Activated T-helper 2 cell treated with anti-CD3 and anti-CD28 coated beads, Interferon-gamma antibody, Interleukin-2, Interleukin-4, amounts not matched to agents 10 μg/mL and 5 μg/mL and 100 μg/mL, durations not matched to agents 14 hours and 24 hours and 36 hours (primary cell): ENCODE measurements at regions of chr2 and their contacts with region 1.

Region 1: DNA sequence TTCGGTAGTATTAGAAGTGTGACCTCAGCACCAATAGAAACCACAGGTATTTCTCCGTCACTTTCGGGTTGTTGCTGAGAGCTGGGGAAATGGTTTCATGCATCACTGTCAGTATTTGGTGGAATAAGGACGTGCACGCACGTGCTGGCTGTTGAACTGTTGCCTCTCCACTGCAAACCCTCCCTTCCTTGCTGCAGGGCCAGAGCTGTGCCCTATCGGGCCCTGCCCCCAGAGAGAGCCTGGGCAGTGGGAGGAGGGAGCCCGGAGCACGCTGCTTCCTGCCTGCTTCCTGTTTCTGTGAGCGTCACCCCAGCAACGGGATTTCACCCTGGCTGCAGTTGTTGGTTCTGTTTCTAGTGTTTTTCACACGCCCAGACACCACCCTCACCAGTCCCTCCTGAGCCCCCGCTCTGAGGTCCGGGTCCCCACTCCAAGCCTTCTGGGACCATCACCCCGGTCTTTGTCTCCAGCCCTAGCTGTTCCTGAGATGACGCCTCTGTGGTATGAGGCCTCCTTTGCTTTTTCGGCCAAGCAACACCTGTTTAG is 47.4 kb downstream of the LRRFIP1 start:
- DNase-seq: peak; percentile 81
- H3K4me3 Mint-ChIP-seq: peak overlapping the region; percentile 83
- H3K27ac Mint-ChIP-seq: peak overlapping the region; percentile 85
- H3K4me1 Mint-ChIP-seq: peaks cover 53% of the 10 kb centered on the region
- H3K27me3 Mint-ChIP-seq: no peaks in the 10 kb centered on the region

Region 2: DNA sequence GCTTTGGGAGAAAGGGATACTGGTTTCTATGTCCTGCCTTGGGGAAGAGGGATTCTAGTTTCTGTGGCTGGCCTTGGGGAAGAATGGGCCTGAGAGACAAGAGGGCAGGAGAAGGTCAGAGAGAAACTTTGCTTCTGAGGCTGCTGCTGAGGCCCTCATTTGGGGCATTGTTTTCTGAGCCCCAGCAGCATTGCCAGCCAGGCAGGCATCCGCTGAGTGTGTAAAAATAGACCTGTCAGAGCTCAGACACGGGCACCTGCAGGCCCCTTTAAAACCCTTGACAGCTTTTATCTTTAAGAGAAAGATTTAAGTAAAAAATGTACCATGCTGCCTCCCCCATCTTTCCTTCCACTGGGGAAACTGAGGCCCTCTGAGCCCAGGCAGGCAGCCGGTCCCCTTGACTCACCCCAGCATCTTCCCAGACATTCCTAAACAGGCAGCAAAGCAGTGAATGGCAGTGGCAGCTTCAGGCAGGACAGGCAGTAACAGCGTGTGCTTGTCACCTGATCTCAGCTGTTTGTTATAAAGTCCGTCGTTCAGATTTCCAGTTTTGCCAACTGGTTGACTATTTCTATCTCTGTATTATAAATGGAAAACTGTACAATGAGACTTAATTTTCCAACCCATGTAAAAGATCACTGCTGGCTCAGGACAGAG is 160.2 kb before region 1 on chr2:
- intact Hi-C with region 1: no loop called
- DNase-seq: no peak
- H3K4me3 Mint-ChIP-seq: no peak overlapping the region
- H3K27ac Mint-ChIP-seq: no peak overlapping the region
- H3K4me1 Mint-ChIP-seq: no peaks in the 10 kb centered on the region
- H3K27me3 Mint-ChIP-seq: no peaks in the 10 kb centered on the region

Region 3: GRCh38 chr2:237627441-237628246 is 47.2 kb before region 1 on chr2 and contains the start of gene LRRFIP1:
- intact Hi-C with region 1: loop called (anchors 2 kb)
- DNase-seq: no peak
- H3K4me3 Mint-ChIP-seq: peak within 1 kb of the TSS; percentile 70
- H3K27ac Mint-ChIP-seq: no peak within 1 kb of the TSS
- H3K4me1 Mint-ChIP-seq: peaks cover 3% of the 10 kb centered on the region
- H3K27me3 Mint-ChIP-seq: peaks cover 56% of the 10 kb centered on the region
- total RNA-seq, gene LRRFIP1: 254 and 256 TPM in 2 replicates

Region 4: GRCh38 chr2:237691908-237692600 is 17.2 kb after region 1 on chr2:
- intact Hi-C with region 1: loop called (anchors 1 kb)
- DNase-seq: peak; percentile 91
- H3K4me3 Mint-ChIP-seq: peak overlapping the region; percentile 99
- H3K27ac Mint-ChIP-seq: peak overlapping the region; percentile 98
- H3K4me1 Mint-ChIP-seq: peaks cover 59% of the 10 kb centered on the region
- H3K27me3 Mint-ChIP-seq: no peaks in the 10 kb centered on the region

Region 5: DNA sequence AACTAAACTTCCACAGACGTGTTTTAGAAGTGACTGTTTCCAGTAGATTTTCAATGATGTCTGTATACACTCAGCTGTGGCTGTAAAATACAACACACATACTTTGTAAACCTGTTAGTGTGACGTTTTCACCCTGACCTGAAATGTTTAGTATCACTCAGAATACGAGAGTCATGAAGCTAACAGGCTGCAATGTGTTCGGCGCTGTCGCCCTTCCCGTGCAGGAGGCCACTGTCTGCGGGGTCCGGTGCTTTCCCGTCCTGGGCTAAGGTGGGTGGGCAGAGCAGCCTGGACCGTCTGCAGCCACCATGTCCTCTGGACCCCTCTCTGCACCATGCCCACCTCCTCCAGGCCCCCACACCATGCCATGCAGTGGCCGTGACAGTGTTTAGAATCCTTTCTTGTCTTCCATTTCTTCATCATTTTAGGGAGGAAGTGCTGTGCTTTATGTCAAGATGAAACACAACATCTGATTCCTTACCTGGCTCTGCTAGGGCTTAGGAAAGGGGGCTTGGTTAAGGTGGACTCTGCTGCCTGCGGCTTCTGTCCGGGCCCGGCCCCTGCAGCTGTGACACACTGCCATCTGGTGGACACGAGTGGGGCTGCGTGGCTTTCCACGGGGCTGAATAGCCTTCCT is 69.9 kb after region 1 on chr2:
- intact Hi-C with region 1: loop called (anchors 1 kb)
- DNase-seq: peak; percentile 53
- H3K4me3 Mint-ChIP-seq: no peak overlapping the region
- H3K27ac Mint-ChIP-seq: peak overlapping the region; percentile 68
- H3K4me1 Mint-ChIP-seq: peaks cover 14% of the 10 kb centered on the region
- H3K27me3 Mint-ChIP-seq: no peaks in the 10 kb centered on the region

Region 6: DNA sequence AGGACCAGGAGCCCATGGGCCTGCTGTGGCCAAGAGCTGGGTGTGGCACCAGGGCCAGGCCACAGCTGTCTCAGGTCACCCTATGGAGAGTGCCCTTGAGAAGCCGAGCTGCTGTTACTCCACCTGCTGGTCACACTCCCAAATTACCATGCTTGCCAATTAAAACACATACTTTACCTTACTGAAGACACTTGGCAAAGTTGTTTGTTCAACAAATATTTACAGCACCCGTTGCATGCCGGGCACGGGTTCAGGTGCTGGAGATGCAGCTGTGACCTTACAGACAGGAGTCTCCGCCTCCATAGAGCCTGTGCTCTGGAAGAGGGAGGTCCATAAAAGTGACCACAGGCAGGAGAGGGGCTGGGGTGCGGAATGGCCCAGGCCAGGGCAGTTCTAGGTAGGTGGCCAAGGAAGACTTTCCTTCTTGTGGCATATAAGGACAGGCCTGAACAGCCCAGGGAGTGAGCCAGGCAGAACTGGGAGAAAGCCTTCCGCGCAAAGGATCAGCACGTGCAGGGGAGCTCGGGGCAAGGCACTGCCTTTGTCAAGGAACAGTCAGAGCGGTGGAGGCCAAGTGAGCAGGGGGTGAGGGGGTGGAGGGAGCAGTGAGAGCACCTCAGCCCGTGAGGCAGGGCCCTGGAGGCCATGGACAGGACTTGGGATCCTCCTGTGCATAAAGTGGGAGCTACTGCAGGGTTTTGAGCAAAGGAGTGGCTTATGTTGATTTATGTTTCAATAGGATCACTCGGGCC is 100.2 kb after region 1 on chr2:
- intact Hi-C with region 1: loop called (anchors 1 kb)
- DNase-seq: peak; percentile 33
- H3K4me3 Mint-ChIP-seq: no peak overlapping the region
- H3K27ac Mint-ChIP-seq: peak overlapping the region; percentile 45
- H3K4me1 Mint-ChIP-seq: no peaks in the 10 kb centered on the region
- H3K27me3 Mint-ChIP-seq: no peaks in the 10 kb centered on the region